Activated CD8-positive, alpha-beta T cell treated with anti-CD3 and anti-CD28 coated beads for 36 hours (primary cell): ENCODE measurements at regions of chr12 and their contacts with region 1.

Region 1: DNA sequence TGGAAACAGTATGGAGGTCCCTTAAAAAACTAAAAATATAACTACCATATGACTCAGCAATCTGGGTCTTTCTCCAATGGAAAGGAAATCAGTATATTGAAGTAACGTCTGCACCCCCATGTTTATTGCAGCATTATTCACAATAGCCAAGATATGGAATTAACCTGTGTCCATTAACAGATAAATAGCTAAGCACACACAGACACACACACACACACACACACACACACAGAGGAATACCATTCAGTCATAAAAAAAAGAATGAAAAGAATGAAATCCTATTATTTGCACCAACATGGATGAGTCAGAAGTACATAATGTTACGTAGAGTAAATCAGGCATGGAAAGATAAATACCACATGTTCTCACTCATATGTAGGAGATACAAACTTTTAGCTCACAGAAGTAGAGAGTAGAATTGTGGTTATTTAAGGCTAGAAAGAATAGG is 4.7 kb downstream of the KLRK1 start:
- DNase-seq: no peak
- ATAC-seq: peak; percentile 68
- H3K4me3 Mint-ChIP-seq: peak overlapping the region; percentile 90
- H3K27ac Mint-ChIP-seq: peak overlapping the region; percentile 92
- H3K4me1 Mint-ChIP-seq: peaks cover 47% of the 10 kb centered on the region
- H3K27me3 Mint-ChIP-seq: no peaks in the 10 kb centered on the region
- CTCF ChIP-seq: no peak

Region 2: GRCh38 chr12:10406725-10407124 is 21.5 kb after region 1 on chr12:
- CTCF ChIA-PET with region 1: no interaction called
- POLR2A ChIA-PET with region 1: interaction called, 13 read pairs
- intact Hi-C with region 1: no loop called
- DNase-seq: no peak
- ATAC-seq: no peak
- H3K4me3 Mint-ChIP-seq: peak overlapping the region; percentile 69
- H3K27ac Mint-ChIP-seq: peak overlapping the region; percentile 85
- H3K4me1 Mint-ChIP-seq: peaks cover 29% of the 10 kb centered on the region
- H3K27me3 Mint-ChIP-seq: no peaks in the 10 kb centered on the region
- CTCF ChIP-seq: no peak